Aorta (tissue), 5 donors: ENCODE measurements at regions of chr12 and their contacts with region 1.

Region 1: DNA sequence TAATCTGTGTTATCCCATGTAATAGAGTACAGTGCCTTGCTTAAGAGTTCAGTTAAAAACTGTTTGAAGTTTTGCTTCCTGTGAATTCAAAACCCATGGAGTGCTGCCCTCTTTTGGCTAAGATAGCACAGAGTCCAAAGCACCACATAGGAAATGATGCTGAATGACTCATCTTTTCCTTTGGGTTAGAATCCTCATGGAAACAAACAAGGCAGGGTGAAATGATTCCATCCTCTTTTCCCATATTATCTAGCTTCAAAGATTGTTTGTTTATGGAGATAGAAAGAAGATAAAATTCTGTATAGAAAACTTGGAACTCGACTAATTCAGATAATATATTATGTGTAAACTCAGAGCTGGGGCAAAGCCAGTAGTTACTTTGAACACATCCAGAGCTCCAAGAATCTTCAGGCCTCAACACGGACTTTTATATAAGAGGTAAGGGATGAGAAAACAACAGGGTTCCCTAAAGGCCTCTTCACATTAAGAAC is 87.4 kb downstream of the OTOGL start:
- DNase-seq: no peak
- ATAC-seq: peak; percentile 92
- H3K4me3 ChIP-seq: peak overlapping the region in 1 of 2 donors; percentile 45
- H3K27ac ChIP-seq: peak overlapping the region; percentile 80 to 84
- H3K4me1 ChIP-seq: peaks cover 0 to 3% of the 10 kb centered on the region in 2 donors
- H3K27me3 ChIP-seq: no peaks in the 10 kb centered on the region

Region 2: GRCh38 chr12:79407671-79408622 is 778.8 kb before region 1 on chr12:
- intact Hi-C with region 1: loop called (anchors 5 kb)
- DNase-seq: peak in 1 of 2 donors; percentile 50
- ATAC-seq: peak; percentile 86
- H3K4me3 ChIP-seq: no peak overlapping the region
- H3K27ac ChIP-seq: peak overlapping the region; percentile 57 to 90
- H3K4me1 ChIP-seq: peaks cover 2 to 3% of the 10 kb centered on the region in 2 donors
- H3K27me3 ChIP-seq: no peaks in the 10 kb centered on the region

Region 3: DNA sequence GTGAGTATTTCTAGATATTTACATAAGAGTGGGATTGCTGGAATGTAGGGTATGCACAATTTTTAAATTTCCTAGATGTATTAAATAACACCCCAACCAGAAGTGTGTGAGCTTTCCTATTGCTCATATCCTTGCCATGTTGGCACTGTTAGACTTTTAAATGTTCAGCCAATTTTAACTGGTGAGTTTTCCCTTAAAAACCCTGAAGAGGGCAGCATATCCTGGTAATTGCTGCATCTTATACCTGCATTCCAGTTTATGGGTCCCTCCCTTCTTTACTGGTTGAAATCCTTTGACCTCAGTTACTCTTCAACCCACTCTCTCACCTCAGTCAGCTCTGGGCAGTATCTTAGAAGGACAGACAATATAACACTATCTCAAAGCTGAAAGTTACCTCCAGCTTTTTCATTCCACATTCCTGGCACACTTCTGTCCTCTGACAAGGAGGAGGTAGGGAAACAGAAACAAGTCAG is 766.6 kb before region 1 on chr12:
- intact Hi-C with region 1: loop called in 1 of 2 experiments (anchors 5 kb)
- DNase-seq: no peak
- ATAC-seq: peak; percentile 46
- H3K4me3 ChIP-seq: no peak overlapping the region
- H3K27ac ChIP-seq: peak overlapping the region in 1 of 2 donors; percentile 36
- H3K4me1 ChIP-seq: peaks cover 1 to 8% of the 10 kb centered on the region in 2 donors
- H3K27me3 ChIP-seq: no peaks in the 10 kb centered on the region

Region 4: DNA sequence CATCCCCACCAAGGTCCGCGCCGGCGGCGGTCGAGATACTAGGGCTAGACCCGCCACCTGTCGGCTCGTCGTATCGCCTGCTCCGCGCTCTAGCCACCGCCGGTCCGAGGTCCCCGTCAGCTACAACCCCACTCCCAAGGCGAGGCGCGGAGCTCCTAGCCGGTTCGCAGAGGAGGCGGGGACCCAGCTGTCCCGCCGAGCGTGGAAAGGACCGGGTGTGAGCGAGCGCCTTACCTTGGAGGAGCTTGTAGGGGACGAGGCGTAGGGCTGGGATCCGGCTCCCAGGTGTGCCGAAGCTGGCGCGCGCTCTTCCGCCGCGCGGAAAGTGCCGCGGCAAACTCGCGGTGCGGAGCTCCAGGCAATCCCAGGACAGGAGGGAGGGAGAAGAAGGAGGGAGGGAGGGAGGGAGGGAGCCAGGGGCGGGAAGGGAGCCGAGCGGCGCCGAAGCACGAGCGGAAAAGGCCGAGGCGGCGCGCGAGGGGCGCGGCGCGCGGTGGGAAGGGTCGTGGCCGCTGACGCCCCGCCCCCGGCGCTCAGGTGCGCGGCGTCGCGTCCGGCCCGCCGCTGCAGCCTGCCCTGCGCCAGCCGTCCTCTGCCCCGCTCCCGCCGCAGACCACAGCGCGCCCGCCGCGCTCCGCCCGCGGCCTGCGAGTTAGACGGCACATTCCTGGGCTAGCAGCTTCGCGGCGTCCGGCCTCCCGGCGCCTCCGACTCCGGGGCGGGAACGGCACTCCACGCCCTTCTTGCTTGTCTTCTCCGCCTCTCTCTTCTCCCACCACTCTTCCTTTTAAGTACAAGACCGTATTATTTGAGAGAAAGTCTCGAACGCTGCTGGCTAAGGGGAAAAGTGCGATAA is 495.9 kb before region 1 on chr12 and contains the start of gene PAWR:
- intact Hi-C with region 1: loop called in 1 of 2 experiments (anchors 10 kb)
- DNase-seq: peak; percentile 73 to 90
- ATAC-seq: peak; percentile 88
- H3K4me3 ChIP-seq: peak within 1 kb of the TSS; percentile 96 to 99
- H3K27ac ChIP-seq: peak within 1 kb of the TSS; percentile 71 to 96
- H3K4me1 ChIP-seq: peaks cover 0 to 4% of the 10 kb centered on the region in 2 donors
- H3K27me3 ChIP-seq: no peaks in the 10 kb centered on the region
- total RNA-seq, gene PAWR: 110 to 150 TPM

Region 5: GRCh38 chr12:80053048-80053790 is 133.6 kb before region 1 on chr12:
- intact Hi-C with region 1: loop called (anchors 5 to 10 kb)
- DNase-seq: peak; percentile 91 to 93
- ATAC-seq: peak; percentile 86
- H3K4me3 ChIP-seq: peak overlapping the region in 1 of 2 donors; percentile 15
- H3K27ac ChIP-seq: peak overlapping the region in 1 of 2 donors; percentile 57
- H3K4me1 ChIP-seq: no peaks in the 10 kb centered on the region
- H3K27me3 ChIP-seq: no peaks in the 10 kb centered on the region